IMR-90 (cell line): ENCODE measurements at regions of chr1 and their contacts with region 1.

Region 1: DNA sequence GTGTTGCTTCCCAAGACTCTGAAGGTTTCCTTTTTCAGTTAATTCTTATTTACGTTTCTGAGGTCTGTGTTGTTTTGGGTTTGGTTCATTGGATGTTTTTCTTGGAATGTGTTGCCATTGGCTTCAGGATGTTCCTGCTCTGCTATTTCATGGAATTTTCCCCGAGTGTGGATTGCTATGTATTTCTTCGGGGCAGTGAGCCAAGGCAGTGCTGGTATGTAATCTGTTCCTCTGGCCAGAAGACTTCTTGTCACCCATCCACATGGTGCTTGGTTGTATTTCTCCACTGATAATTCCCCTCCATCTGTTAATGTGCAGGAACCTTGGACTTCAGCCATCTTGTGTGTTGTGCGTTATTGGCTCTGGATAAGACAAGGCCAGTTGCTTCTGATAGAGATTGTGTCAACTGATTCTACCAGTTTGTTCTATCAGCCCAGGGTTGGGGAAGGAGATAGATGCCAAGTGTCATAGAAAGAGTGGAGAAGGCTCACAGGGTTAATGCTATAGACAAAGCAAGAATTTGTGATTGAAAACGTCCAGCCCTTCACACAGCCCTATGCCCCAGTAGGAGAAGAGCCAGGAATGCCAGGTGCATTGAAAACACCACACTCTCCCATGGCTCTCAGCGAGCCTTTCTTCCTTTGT is 505.2 kb downstream of the PLPP3 start:
- DNase-seq: peak; percentile 88
- ATAC-seq: peak; percentile 82
- H3K4me3 ChIP-seq: no peak overlapping the region
- H3K27ac ChIP-seq: peak overlapping the region; percentile 54; the same call in 1 of the 2 replicates
- H3K4me1 ChIP-seq: peaks cover 9% of the 10 kb centered on the region
- H3K27me3 ChIP-seq: no peaks in the 10 kb centered on the region
- CTCF ChIP-seq: no peak
- POLR2A ChIP-seq: no peak
- RAD21 ChIP-seq: no peak

Region 2: DNA sequence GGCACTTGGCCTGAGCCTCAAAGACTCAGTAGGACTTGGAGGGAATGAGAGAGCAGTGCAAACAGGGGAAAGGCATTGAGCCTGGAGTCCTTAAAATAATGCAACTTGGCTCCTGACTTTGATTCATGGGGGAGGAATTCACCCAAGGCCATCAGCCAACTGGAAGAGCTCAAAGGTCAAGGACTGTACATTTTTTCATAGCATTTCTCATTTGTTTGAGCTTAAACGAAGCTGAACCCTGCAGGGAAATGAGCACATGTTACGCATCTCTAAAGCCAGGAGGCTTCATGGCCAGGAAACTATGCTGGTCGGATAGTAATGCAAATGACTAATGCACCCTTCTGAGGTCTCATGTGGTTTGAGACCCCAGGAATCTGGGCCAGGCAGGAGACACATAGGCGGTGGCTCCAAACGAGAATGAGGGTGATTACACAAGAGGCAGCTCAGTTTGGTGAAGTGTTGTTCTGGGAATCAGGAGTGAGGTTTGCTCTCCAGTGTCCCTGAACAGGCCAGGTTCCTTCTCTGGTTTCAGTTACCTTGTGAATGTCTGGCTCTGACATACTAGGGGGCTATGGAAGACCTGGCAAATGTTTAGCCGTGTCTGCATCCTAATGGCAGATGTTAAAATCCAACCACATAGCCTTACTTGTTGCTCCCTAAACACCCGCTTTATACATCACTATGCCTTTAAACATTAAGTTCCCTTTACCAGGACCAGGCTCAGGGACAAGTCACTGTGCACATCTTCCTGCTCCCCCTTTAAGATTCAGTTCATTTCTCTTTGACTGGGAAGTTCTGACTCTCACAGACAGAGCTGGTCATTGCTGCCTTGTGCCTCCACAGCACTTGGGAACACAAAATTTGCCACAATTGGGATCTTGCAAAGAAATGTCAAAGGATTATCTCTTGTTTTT is 355.1 kb before region 1 on chr1:
- CTCF ChIA-PET with region 1: no interaction called
- POLR2A ChIA-PET with region 1: no interaction called
- dilution Hi-C with region 1: no loop called
- in situ Hi-C with region 1: no loop called
- intact Hi-C with region 1: loop called (anchors 5 kb)
- DNase-seq: peak; percentile 100
- ATAC-seq: peak; percentile 75
- H3K4me3 ChIP-seq: no peak overlapping the region
- H3K27ac ChIP-seq: peak overlapping the region; percentile 97
- H3K4me1 ChIP-seq: peaks cover 31% of the 10 kb centered on the region
- H3K27me3 ChIP-seq: no peaks in the 10 kb centered on the region
- CTCF ChIP-seq: no peak
- POLR2A ChIP-seq: peak; percentile 54; the same call in 1 of the 2 replicates
- RAD21 ChIP-seq: peak; percentile 38

Region 3: GRCh38 chr1:56034222-56034621 is 39.9 kb before region 1 on chr1:
- CTCF ChIA-PET with region 1: no interaction called
- POLR2A ChIA-PET with region 1: no interaction called
- dilution Hi-C with region 1: no loop called
- in situ Hi-C with region 1: no loop called
- intact Hi-C with region 1: no loop called
- DNase-seq: peak; percentile 75
- ATAC-seq: peak; percentile 72; the same call in 1 of the 2 replicates
- H3K4me3 ChIP-seq: no peak overlapping the region
- H3K27ac ChIP-seq: no peak overlapping the region
- H3K4me1 ChIP-seq: peaks cover 4% of the 10 kb centered on the region; the same call in 1 of the 2 replicates
- H3K27me3 ChIP-seq: no peaks in the 10 kb centered on the region
- CTCF ChIP-seq: no peak
- POLR2A ChIP-seq: no peak
- RAD21 ChIP-seq: no peak